Prostate gland (tissue), 2 donors: ENCODE measurements at regions of chr2 and their contacts with region 1.

Region 1: GRCh38 chr2:134411828-134412638 is 158.2 kb downstream of the MGAT5 start:
- DNase-seq: peak; percentile 58
- H3K4me3 ChIP-seq: no peak overlapping the region
- H3K27ac ChIP-seq: no peak overlapping the region
- H3K4me1 ChIP-seq: no peaks in the 10 kb centered on the region
- H3K27me3 ChIP-seq: no peaks in the 10 kb centered on the region
- CTCF ChIP-seq: peak in 3 of 4 experiments; percentile 31 to 66 (median 63)
- POLR2A ChIP-seq: no peak

Region 2: GRCh38 chr2:134375935-134376334 is 36.1 kb before region 1 on chr2:
- intact Hi-C with region 1: loop called (anchors 5 kb)
- DNase-seq: peak; percentile 24
- H3K4me3 ChIP-seq: no peak overlapping the region
- H3K27ac ChIP-seq: no peak overlapping the region
- H3K4me1 ChIP-seq: no peaks in the 10 kb centered on the region
- H3K27me3 ChIP-seq: no peaks in the 10 kb centered on the region
- CTCF ChIP-seq: peak in 2 of 4 experiments; percentile 30 to 38
- POLR2A ChIP-seq: no peak